ENCODE measurements at regions of chr22 and their contacts with region 1.

Region 1: DNA sequence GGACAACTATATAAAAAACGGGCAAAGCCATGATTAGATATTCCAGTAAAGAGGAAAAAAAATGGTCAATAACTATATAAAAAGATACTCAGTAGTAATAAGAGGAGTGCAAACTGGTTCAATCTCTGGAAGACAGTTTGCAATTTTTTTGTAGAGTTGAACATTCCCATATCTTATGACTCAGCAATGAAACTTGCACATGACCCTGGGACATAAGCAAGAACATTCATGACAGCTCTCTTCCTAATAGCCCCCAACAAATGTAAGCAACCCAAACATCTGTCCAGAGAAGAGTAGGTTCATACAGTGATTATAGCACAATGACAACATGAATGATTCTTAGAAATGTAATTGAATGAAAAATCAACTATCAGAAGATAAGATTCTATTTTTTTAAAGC is 21.8 kb upstream of the CSF2RB start:
- DNase-seq: no peak
- ATAC-seq: no peak
- H3K4me3 ChIP-seq: no peak overlapping the region
- H3K4me3 Mint-ChIP-seq: no peak overlapping the region
- H3K27ac ChIP-seq: no peak overlapping the region
- H3K27ac Mint-ChIP-seq: no peak overlapping the region
- H3K4me1 ChIP-seq: no peaks in the 10 kb centered on the region
- H3K4me1 Mint-ChIP-seq: no peaks in the 10 kb centered on the region
- H3K27me3 ChIP-seq: no peaks in the 10 kb centered on the region
- H3K27me3 Mint-ChIP-seq: peaks cover 0 to 12% of the 10 kb centered on the region in 2 donors
- CTCF ChIP-seq: no peak

Region 2: GRCh38 chr22:35914665-35915476 is 976.8 kb before region 1 on chr22:
- intact Hi-C with region 1: no loop called
- DNase-seq: peak in 1 of 2 donors; percentile 19
- ATAC-seq: no peak
- H3K4me3 ChIP-seq: no peak overlapping the region
- H3K4me3 Mint-ChIP-seq: no peak overlapping the region
- H3K27ac ChIP-seq: no peak overlapping the region
- H3K27ac Mint-ChIP-seq: no peak overlapping the region
- H3K4me1 ChIP-seq: no peaks in the 10 kb centered on the region
- H3K4me1 Mint-ChIP-seq: peaks cover 0 to 7% of the 10 kb centered on the region in 2 donors
- H3K27me3 ChIP-seq: no peaks in the 10 kb centered on the region
- H3K27me3 Mint-ChIP-seq: peaks cover 13 to 16% of the 10 kb centered on the region in 2 donors
- CTCF ChIP-seq: no peak

Region 3: GRCh38 chr22:36862251-36863242 is 29.1 kb before region 1 on chr22:
- intact Hi-C with region 1: loop called (anchors 1 kb)
- DNase-seq: peak in 1 of 2 donors; percentile 13
- ATAC-seq: peak in 1 of 3 donors; percentile 62
- H3K4me3 ChIP-seq: no peak overlapping the region
- H3K4me3 Mint-ChIP-seq: no peak overlapping the region
- H3K27ac ChIP-seq: peak overlapping the region; percentile 73
- H3K27ac Mint-ChIP-seq: no peak overlapping the region
- H3K4me1 ChIP-seq: peaks cover 37% of the 10 kb centered on the region
- H3K4me1 Mint-ChIP-seq: peaks cover 0 to 7% of the 10 kb centered on the region in 2 donors
- H3K27me3 ChIP-seq: no peaks in the 10 kb centered on the region
- H3K27me3 Mint-ChIP-seq: peaks cover 0 to 7% of the 10 kb centered on the region in 2 donors
- CTCF ChIP-seq: no peak

Region 4: DNA sequence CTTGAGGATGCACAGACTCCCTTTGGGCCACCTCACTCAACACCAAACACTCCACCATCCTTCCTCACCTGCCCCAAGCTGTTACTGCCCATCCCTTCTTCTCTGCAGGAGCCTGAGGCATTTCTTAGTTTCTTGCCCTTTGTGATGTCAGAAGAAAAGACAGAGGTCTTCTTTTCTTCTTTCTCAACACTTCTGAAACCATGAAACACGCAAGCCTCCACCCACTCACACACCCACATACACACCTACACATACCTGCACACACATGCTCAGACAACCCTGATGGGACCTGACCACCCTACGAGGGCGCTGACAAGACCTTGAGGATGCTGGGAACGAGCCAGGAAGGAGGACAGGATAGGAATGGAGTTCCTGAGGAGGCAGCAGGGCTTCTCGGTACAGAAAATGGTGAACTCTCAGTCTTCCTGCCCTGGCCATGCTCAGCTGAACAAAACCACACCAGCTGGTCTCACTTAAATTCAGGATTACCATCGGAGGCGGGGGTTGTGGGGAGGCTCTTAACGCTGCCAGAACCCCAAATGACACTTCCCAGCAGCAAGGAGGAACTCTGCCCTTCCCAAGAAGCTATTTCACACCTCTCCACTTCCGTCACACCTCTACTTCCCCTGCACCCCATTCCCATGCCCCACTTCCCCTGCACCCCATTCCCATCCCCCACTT is 62.7 kb after region 1 on chr22:
- intact Hi-C with region 1: no loop called
- DNase-seq: no peak
- ATAC-seq: no peak
- H3K4me3 ChIP-seq: no peak overlapping the region
- H3K4me3 Mint-ChIP-seq: no peak overlapping the region
- H3K27ac ChIP-seq: no peak overlapping the region
- H3K27ac Mint-ChIP-seq: no peak overlapping the region
- H3K4me1 ChIP-seq: no peaks in the 10 kb centered on the region
- H3K4me1 Mint-ChIP-seq: peaks cover 0 to 7% of the 10 kb centered on the region in 2 donors
- H3K27me3 ChIP-seq: no peaks in the 10 kb centered on the region
- H3K27me3 Mint-ChIP-seq: peaks cover 12 to 15% of the 10 kb centered on the region in 2 donors
- CTCF ChIP-seq: no peak